ENCODE measurements at regions of chr2 and their contacts with region 1.

Region 1: DNA sequence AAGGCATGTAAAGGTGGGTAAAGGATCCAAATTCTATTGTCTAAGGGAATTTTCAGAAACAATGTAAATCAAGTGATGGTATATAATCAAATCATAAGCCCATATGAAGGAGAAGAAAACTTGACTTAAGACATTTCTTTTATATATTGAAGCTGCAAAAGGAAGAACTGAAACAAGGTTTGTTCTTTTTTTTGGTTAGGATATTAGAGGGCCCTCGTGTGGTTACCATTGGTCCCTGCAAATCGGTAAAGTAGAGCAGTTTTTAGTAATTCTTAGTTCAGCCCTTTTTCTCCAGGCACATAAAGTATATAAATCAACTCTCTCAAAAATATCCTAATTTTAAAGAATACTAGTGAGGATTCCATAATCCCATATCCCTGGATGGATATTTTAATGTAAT is 105.6 kb upstream of the STK17B start:
- DNase-seq: peak; percentile 81
- ATAC-seq: peak; percentile 48
- H3K4me3 ChIP-seq: peak overlapping the region in 2 of 5 experiments; percentile 7 to 50
- H3K4me3 Mint-ChIP-seq: no peak overlapping the region
- H3K27ac ChIP-seq: peak overlapping the region; percentile 19 to 85
- H3K27ac Mint-ChIP-seq: peak overlapping the region; percentile 95
- H3K4me1 ChIP-seq: peaks cover 43% of the 10 kb centered on the region in 2 donors
- H3K4me1 Mint-ChIP-seq: peaks cover 43% of the 10 kb centered on the region
- H3K27me3 ChIP-seq: no peaks in the 10 kb centered on the region
- H3K27me3 Mint-ChIP-seq: no peaks in the 10 kb centered on the region
- CTCF ChIP-seq: peak; percentile 82

Region 2: DNA sequence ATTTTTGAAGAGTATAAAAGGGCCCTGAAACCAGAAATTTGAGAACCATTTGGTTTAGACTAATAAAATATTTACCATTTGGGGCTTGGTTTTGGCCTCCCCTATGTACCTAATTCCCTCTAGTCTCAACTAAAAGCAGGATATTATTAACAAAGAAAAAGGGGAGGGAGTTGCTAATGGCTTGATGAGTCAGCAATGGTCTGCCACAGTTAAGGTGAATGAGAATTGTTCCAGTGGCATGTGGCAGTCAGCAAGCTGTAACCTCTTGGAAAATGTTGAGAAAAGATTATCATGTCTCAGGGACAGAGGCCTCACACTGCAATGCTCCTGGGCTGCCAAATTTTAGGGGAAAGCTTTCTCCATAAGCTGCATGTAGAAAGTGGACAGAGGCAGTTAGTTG is 640.1 kb before region 1 on chr2:
- CTCF ChIA-PET with region 1: no interaction called
- POLR2A ChIA-PET with region 1: no interaction called
- intact Hi-C with region 1: no loop called
- DNase-seq: no peak
- ATAC-seq: no peak
- H3K4me3 ChIP-seq: no peak overlapping the region
- H3K4me3 Mint-ChIP-seq: no peak overlapping the region
- H3K27ac ChIP-seq: no peak overlapping the region
- H3K27ac Mint-ChIP-seq: no peak overlapping the region
- H3K4me1 ChIP-seq: peaks cover 14 to 18% of the 10 kb centered on the region in 2 donors
- H3K4me1 Mint-ChIP-seq: peaks cover 22% of the 10 kb centered on the region
- H3K27me3 ChIP-seq: no peaks in the 10 kb centered on the region
- H3K27me3 Mint-ChIP-seq: no peaks in the 10 kb centered on the region
- CTCF ChIP-seq: no peak

Region 3: DNA sequence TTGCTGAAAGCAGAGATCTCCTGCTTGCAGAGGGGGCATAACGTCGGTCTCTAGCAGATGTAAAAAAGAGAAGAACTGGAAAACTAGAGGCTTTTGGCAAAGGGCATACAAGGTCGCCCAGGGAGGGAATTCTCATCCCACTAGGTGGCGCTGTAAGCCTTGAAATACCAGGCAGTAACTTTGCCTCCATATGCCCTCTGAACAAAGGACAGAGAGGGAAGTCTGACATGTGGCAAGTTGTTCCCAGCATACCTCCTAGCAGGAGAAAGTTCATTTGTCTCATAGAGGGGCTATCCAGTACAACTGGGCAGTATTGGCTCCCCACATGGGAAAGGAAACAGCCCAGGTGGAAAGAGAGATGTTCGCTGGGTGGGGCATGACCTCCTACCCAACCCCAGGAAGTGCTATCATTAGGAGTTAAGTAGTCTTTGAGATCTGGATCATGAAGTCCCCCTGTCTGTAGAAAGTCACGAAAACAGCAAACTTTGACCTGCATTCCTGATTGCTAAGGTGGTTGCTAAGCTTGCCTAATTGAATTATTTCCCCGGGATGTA is 145.5 kb before region 1 on chr2:
- CTCF ChIA-PET with region 1: interaction called, 13 read pairs
- POLR2A ChIA-PET with region 1: no interaction called
- intact Hi-C with region 1: no loop called
- DNase-seq: peak; percentile 63
- ATAC-seq: peak; percentile 41
- H3K4me3 ChIP-seq: no peak overlapping the region
- H3K4me3 Mint-ChIP-seq: no peak overlapping the region
- H3K27ac ChIP-seq: no peak overlapping the region
- H3K27ac Mint-ChIP-seq: peak overlapping the region; percentile 53
- H3K4me1 ChIP-seq: no peaks in the 10 kb centered on the region
- H3K4me1 Mint-ChIP-seq: no peaks in the 10 kb centered on the region
- H3K27me3 ChIP-seq: no peaks in the 10 kb centered on the region
- H3K27me3 Mint-ChIP-seq: no peaks in the 10 kb centered on the region
- CTCF ChIP-seq: peak; percentile 34

Region 4: GRCh38 chr2:196149948-196150347 is 127.1 kb before region 1 on chr2:
- CTCF ChIA-PET with region 1: interaction called, 15 read pairs
- POLR2A ChIA-PET with region 1: no interaction called
- intact Hi-C with region 1: no loop called
- DNase-seq: peak; percentile 83
- ATAC-seq: peak; percentile 80
- H3K4me3 ChIP-seq: peak overlapping the region in 2 of 5 experiments; percentile 11 to 52
- H3K4me3 Mint-ChIP-seq: peak overlapping the region; percentile 86
- H3K27ac ChIP-seq: peak overlapping the region; percentile 71 to 90
- H3K27ac Mint-ChIP-seq: peak overlapping the region; percentile 97
- H3K4me1 ChIP-seq: peaks cover 37 to 55% of the 10 kb centered on the region in 2 donors
- H3K4me1 Mint-ChIP-seq: peaks cover 65% of the 10 kb centered on the region
- H3K27me3 ChIP-seq: no peaks in the 10 kb centered on the region
- H3K27me3 Mint-ChIP-seq: no peaks in the 10 kb centered on the region
- CTCF ChIP-seq: no peak

Region 5: DNA sequence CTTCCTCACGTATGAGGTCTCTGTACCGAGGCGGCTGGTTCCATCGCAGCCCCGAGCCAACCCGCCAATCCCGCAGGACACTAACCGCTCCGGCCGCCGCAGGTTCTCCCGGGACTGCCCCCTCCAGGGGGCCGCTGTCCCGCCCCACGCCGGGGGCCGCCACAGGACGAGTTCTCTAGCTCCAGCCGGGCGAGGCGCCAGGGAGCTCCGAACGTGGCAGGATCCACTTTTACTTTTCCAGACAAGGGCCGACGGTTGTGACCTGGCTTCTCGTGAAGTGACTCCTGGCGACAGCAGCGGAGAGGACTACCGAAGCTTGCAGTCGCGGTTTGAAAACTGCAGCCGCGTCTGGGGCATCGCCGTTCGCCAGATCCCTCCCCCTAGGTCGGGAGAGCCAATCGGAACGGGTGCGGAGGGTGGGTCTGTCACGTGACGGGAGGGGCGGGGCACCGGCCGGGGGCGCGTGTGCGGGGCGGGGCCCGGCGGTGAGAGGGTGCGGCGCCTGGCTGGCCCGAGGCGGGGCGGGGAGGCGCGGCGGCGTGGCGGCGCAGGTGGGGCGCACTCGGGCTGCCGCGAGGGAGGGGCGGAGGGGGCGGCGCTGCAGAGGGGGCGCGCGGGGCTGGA is 105.6 kb before region 1 on chr2 and contains the start of gene STK17B:
- CTCF ChIA-PET with region 1: interaction called, 109 read pairs
- POLR2A ChIA-PET with region 1: interaction called, 20 read pairs
- intact Hi-C with region 1: loop called (anchors 1 kb)
- DNase-seq: peak; percentile 98
- ATAC-seq: peak; percentile 66
- H3K4me3 ChIP-seq: peak within 1 kb of the TSS; percentile 94 to 100 (median 98)
- H3K4me3 Mint-ChIP-seq: peak within 1 kb of the TSS; percentile 100
- H3K27ac ChIP-seq: peak within 1 kb of the TSS; percentile 93 to 99
- H3K27ac Mint-ChIP-seq: peak within 1 kb of the TSS; percentile 99
- H3K4me1 ChIP-seq: peaks cover 50 to 51% of the 10 kb centered on the region in 2 donors
- H3K4me1 Mint-ChIP-seq: peaks cover 56% of the 10 kb centered on the region
- H3K27me3 ChIP-seq: no peaks in the 10 kb centered on the region
- H3K27me3 Mint-ChIP-seq: no peaks in the 10 kb centered on the region
- CTCF ChIP-seq: no peak
- total RNA-seq, gene STK17B: 249 and 261 TPM in 2 replicates

Region 6: DNA sequence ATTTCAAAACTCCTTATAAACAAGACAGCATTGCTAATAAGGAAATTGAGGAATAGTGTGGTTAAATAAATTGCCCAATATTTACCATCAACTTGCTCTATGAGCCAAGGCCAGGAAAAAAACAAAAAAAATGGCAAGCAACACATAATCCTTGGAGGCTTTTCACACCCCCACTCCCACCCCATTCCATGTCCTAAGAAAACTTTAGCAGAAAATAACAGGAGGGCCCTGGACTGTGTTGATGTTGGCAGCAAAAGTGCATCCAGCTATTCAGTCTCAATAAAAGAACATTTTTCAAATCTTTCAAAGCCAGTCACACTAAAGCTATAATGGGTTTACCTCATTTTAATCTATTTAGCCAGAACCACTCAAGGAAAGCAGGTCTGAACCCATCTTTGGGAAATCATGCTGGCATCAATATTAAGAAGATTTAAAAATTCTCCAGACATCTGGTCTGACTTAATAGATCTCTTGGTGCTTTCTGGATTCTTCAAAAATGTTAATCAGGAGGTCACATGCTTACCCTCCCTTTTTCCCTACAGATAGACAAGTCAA is 71.0 kb before region 1 on chr2:
- CTCF ChIA-PET with region 1: interaction called, 11 read pairs
- POLR2A ChIA-PET with region 1: interaction called, 3 read pairs
- intact Hi-C with region 1: loop called (anchors 1 kb)
- DNase-seq: no peak
- ATAC-seq: no peak
- H3K4me3 ChIP-seq: no peak overlapping the region
- H3K4me3 Mint-ChIP-seq: no peak overlapping the region
- H3K27ac ChIP-seq: no peak overlapping the region
- H3K27ac Mint-ChIP-seq: no peak overlapping the region
- H3K4me1 ChIP-seq: peaks cover 18 to 20% of the 10 kb centered on the region in 2 donors
- H3K4me1 Mint-ChIP-seq: peaks cover 48% of the 10 kb centered on the region
- H3K27me3 ChIP-seq: no peaks in the 10 kb centered on the region
- H3K27me3 Mint-ChIP-seq: no peaks in the 10 kb centered on the region
- CTCF ChIP-seq: no peak

Region 7: DNA sequence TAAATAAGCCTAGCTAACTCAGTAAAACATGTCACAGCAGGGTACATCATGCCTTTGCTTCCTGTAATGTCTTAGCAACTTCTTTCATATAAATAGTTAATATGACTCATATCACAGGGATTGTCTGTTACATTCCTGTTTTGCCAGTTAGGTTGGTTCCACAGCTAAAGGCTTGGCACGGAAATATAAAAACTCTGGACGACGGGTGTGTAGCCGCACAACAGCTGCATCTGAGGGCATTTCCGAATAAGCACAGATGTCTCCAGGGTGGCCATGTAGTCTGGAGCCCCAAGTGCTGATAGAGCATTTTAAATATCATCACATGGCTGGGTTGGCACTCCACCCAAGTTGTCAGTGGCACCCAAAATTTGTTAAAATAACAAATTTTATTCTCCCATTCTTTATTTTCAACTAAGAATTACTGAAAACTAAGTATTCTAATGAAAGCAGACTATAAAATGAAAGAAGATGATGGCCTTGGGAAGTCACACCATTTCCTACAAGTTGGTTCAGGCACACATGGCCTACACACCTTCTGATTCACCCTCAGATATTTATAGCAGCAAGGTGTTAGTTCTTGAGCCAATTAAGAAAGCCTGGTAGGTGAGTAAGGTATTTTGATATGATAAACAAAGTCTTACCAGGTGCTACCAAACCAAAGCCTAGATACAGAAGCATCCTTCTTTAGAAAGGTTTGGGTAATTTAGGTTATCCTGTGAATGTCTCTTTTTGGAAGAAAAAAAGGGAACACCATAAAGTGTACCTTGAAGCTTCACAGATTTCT is 43.8 kb before region 1 on chr2:
- CTCF ChIA-PET with region 1: interaction called, 71 read pairs
- POLR2A ChIA-PET with region 1: no interaction called
- intact Hi-C with region 1: no loop called
- DNase-seq: peak; percentile 26
- ATAC-seq: peak; percentile 23
- H3K4me3 ChIP-seq: peak overlapping the region in 1 of 5 experiments; percentile 17
- H3K4me3 Mint-ChIP-seq: peak overlapping the region; percentile 36
- H3K27ac ChIP-seq: peak overlapping the region; percentile 76 to 82
- H3K27ac Mint-ChIP-seq: peak overlapping the region; percentile 94
- H3K4me1 ChIP-seq: peaks cover 72 to 77% of the 10 kb centered on the region in 2 donors
- H3K4me1 Mint-ChIP-seq: peaks cover 71% of the 10 kb centered on the region
- H3K27me3 ChIP-seq: no peaks in the 10 kb centered on the region
- H3K27me3 Mint-ChIP-seq: no peaks in the 10 kb centered on the region
- CTCF ChIP-seq: no peak

Region 8: DNA sequence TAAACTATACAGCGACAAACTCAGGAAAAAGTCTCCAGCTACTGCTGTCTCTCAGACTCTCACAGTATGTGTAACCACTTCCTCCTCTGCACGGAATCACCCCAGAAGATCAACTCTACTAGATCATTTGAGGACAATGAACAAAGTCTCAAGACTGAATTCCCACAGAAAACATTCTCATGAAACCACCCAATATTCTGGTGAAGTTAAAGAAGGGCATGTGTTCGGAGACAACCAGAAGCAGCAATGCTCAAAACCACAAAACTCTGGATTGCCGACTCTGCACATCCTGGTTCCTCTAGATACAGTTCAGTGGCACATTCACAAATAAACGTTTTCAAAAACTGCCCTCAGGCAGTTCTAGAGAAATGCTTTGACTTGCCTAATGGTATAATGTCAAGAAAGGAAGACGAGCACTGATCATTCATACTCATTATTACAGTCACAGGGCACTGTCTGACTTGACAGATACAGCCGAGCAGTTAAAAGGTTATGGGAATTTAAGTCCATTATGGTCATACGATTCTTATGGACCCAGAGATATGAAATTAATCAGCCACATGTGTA is 13.7 kb before region 1 on chr2:
- CTCF ChIA-PET with region 1: interaction called, 24 read pairs
- POLR2A ChIA-PET with region 1: interaction called, 3 read pairs
- intact Hi-C with region 1: loop called (anchors 2 kb)
- DNase-seq: peak; percentile 74
- ATAC-seq: peak; percentile 84
- H3K4me3 ChIP-seq: peak overlapping the region in 4 of 5 experiments; percentile 21 to 36 (median 24)
- H3K4me3 Mint-ChIP-seq: peak overlapping the region; percentile 78
- H3K27ac ChIP-seq: peak overlapping the region; percentile 67 to 89
- H3K27ac Mint-ChIP-seq: peak overlapping the region; percentile 92
- H3K4me1 ChIP-seq: peaks cover 57 to 72% of the 10 kb centered on the region in 2 donors
- H3K4me1 Mint-ChIP-seq: peaks cover 71% of the 10 kb centered on the region
- H3K27me3 ChIP-seq: no peaks in the 10 kb centered on the region
- H3K27me3 Mint-ChIP-seq: no peaks in the 10 kb centered on the region
- CTCF ChIP-seq: no peak

Region 9: GRCh38 chr2:196331143-196331542 is 54.1 kb after region 1 on chr2:
- CTCF ChIA-PET with region 1: no interaction called
- POLR2A ChIA-PET with region 1: no interaction called
- intact Hi-C with region 1: no loop called
- DNase-seq: no peak
- ATAC-seq: no peak
- H3K4me3 ChIP-seq: no peak overlapping the region
- H3K4me3 Mint-ChIP-seq: no peak overlapping the region
- H3K27ac ChIP-seq: no peak overlapping the region
- H3K27ac Mint-ChIP-seq: no peak overlapping the region
- H3K4me1 ChIP-seq: no peaks in the 10 kb centered on the region
- H3K4me1 Mint-ChIP-seq: peaks cover 6% of the 10 kb centered on the region
- H3K27me3 ChIP-seq: no peaks in the 10 kb centered on the region
- H3K27me3 Mint-ChIP-seq: peaks cover 5% of the 10 kb centered on the region
- CTCF ChIP-seq: no peak